ENCODE measurements at regions of chr9 and their contacts with region 1.

Region 1: GRCh38 chr9:111759762-111760639 is 34.7 kb downstream of the SHOC1 start:
- DNase-seq: peak in 8 of 9 donors; percentile 25 to 77 (median 68)
- ATAC-seq: peak; percentile 82
- H3K4me3 ChIP-seq: no peak overlapping the region
- H3K4me3 Mint-ChIP-seq: no peak overlapping the region
- H3K27ac ChIP-seq: no peak overlapping the region
- H3K27ac Mint-ChIP-seq: no peak overlapping the region
- H3K4me1 ChIP-seq: no peaks in the 10 kb centered on the region
- H3K4me1 Mint-ChIP-seq: peaks cover 3 to 8% (median 5%) of the 10 kb centered on the region in 7 donors
- H3K27me3 ChIP-seq: no peaks in the 10 kb centered on the region
- H3K27me3 Mint-ChIP-seq: no peaks in the 10 kb centered on the region

Region 2: GRCh38 chr9:111926421-111926875 is 166.4 kb after region 1 on chr9:
- CTCF ChIA-PET with region 1: interaction called, 3 read pairs
- POLR2A ChIA-PET with region 1: no interaction called
- intact Hi-C with region 1: loop called (anchors 1 to 10 kb)
- DNase-seq: peak in 7 of 9 donors; percentile 75 to 86 (median 82)
- ATAC-seq: peak; percentile 98
- H3K4me3 ChIP-seq: no peak overlapping the region
- H3K4me3 Mint-ChIP-seq: peak overlapping the region; percentile 61 to 79 (median 72)
- H3K27ac ChIP-seq: peak overlapping the region; percentile 23
- H3K27ac Mint-ChIP-seq: peak overlapping the region; percentile 79 to 94 (median 91)
- H3K4me1 ChIP-seq: peaks cover 29 to 35% of the 10 kb centered on the region in 2 donors
- H3K4me1 Mint-ChIP-seq: peaks cover 21 to 67% (median 50%) of the 10 kb centered on the region in 7 donors
- H3K27me3 ChIP-seq: no peaks in the 10 kb centered on the region
- H3K27me3 Mint-ChIP-seq: no peaks in the 10 kb centered on the region

Region 3: DNA sequence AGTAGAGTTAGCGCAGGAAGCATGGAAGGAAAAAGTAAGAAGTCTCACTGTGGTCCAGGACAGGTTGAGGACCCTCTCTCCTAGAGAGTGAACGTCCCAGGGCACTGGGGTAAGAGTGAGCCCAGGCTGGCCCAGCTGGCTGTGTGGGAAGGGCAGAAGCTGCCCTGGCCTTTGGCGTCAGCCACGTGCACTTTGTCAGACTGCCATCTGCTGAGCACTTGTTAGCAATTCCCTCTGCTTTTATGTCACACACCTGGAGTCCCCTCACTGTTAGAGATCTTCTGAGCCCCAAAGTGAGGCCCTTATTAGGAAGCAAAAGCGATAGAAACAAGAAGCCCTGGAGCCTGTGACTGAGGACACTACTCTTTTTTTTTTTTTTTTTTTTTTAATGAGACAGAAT is 215.7 kb after region 1 on chr9:
- CTCF ChIA-PET with region 1: interaction called, 3 read pairs
- POLR2A ChIA-PET with region 1: no interaction called
- intact Hi-C with region 1: loop called (anchors 1 kb)
- DNase-seq: peak in 2 of 9 donors; percentile 9 to 14
- ATAC-seq: peak; percentile 47
- H3K4me3 ChIP-seq: no peak overlapping the region
- H3K4me3 Mint-ChIP-seq: no peak overlapping the region
- H3K27ac ChIP-seq: no peak overlapping the region
- H3K27ac Mint-ChIP-seq: no peak overlapping the region
- H3K4me1 ChIP-seq: no peaks in the 10 kb centered on the region
- H3K4me1 Mint-ChIP-seq: peaks cover 2 to 20% (median 10%) of the 10 kb centered on the region in 7 donors
- H3K27me3 ChIP-seq: no peaks in the 10 kb centered on the region
- H3K27me3 Mint-ChIP-seq: peaks cover 0 to 13% (median 0%) of the 10 kb centered on the region in 5 donors

Region 4: DNA sequence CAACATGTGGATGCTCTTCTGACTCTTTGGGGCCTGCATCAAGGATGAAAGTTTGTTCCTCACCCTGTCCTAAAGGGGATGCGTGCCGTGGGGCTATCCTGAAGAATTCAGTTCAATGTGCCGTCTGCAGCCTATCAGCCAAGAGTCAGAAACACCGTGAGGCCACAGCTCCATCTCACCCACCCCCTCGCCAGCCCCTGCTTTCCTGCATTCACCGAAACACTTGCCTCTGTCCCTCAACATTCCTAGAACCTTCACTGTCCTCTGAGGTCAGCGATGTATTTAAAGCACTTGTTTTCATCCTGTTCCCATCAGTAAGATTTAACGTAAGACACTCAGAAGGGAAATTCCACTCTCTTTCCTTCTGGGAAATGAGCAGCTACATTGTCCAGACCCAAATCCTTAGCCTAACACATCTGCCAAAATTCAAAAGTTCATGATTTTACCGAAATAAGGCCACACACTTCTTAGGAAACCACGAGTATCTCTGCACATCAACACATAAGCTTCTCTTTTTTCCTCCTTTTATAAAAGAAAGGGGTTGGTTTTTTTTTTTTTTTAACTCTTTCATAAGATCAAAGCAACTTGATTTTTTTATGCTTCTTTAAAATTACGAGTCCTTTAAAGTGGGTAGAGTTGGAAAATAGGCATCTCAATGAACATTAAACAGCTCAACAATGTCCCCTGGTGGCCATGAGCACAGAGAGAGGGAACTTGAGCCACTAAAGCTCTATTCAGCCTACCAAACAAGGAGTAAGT is 314.4 kb after region 1 on chr9:
- CTCF ChIA-PET with region 1: interaction called, 96 read pairs
- POLR2A ChIA-PET with region 1: interaction called, 3 read pairs
- intact Hi-C with region 1: loop called (anchors 1 kb)
- DNase-seq: peak in 8 of 9 donors; percentile 53 to 81 (median 74)
- ATAC-seq: peak; percentile 90
- H3K4me3 ChIP-seq: no peak overlapping the region
- H3K4me3 Mint-ChIP-seq: peak overlapping the region in 9 of 10 donors; percentile 64 to 79 (median 72)
- H3K27ac ChIP-seq: no peak overlapping the region
- H3K27ac Mint-ChIP-seq: peak overlapping the region in 8 of 9 donors; percentile 6 to 85 (median 47)
- H3K4me1 ChIP-seq: peaks cover 3 to 16% of the 10 kb centered on the region in 2 donors
- H3K4me1 Mint-ChIP-seq: peaks cover 14 to 38% (median 28%) of the 10 kb centered on the region in 7 donors
- H3K27me3 ChIP-seq: no peaks in the 10 kb centered on the region
- H3K27me3 Mint-ChIP-seq: no peaks in the 10 kb centered on the region

Measured in naive thymus-derived CD4-positive, alpha-beta T cell (primary cell).